PC-9 (cell line): ENCODE measurements at regions of chr3 and their contacts with region 1.

Region 1: GRCh38 chr3:151864423-151865101 is 8.9 kb upstream of the SUCNR1 start:
- DNase-seq: peak in 1 of 2 experiments; percentile 82
- H3K4me3 ChIP-seq: no peak overlapping the region
- H3K27ac ChIP-seq: peak overlapping the region; percentile 38
- H3K4me1 ChIP-seq: peaks cover 20% of the 10 kb centered on the region
- H3K27me3 ChIP-seq: no peaks in the 10 kb centered on the region
- CTCF ChIP-seq: no peak

Region 2: GRCh38 chr3:151327571-151328198 is 536.9 kb before region 1 on chr3:
- CTCF ChIA-PET with region 1: interaction called, 12 read pairs
- POLR2A ChIA-PET with region 1: no interaction called
- intact Hi-C with region 1: no loop called
- DNase-seq: no peak
- H3K4me3 ChIP-seq: no peak overlapping the region
- H3K27ac ChIP-seq: 0 out of 2 replicates have a peak overlapping the region, but pooled peaks have one; percentile 14
- H3K4me1 ChIP-seq: peaks cover 14% of the 10 kb centered on the region
- H3K27me3 ChIP-seq: no peaks in the 10 kb centered on the region
- CTCF ChIP-seq: peak; percentile 81

Region 3: DNA sequence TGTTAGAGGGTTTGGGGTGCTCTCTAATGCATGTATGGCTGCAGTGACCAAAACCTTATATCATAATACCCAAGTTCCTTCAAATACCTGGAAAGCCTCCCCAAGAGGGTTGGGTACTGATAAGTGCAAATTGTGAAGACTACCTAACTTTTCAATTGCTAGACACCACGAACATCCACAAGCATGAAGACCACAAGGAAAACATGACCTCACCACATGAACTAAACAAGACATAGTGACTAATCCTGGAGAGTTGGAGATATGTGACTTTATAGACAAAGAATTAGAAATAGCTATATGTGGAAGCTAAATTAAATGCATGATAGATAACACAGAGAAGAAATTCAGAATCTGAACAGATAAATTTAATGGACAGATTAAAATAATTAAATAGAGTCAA is 154.7 kb before region 1 on chr3:
- CTCF ChIA-PET with region 1: no interaction called
- POLR2A ChIA-PET with region 1: interaction called, 27 read pairs
- intact Hi-C with region 1: no loop called
- DNase-seq: no peak
- H3K4me3 ChIP-seq: no peak overlapping the region
- H3K27ac ChIP-seq: no peak overlapping the region
- H3K4me1 ChIP-seq: no peaks in the 10 kb centered on the region
- H3K27me3 ChIP-seq: no peaks in the 10 kb centered on the region
- CTCF ChIP-seq: no peak

Region 4: GRCh38 chr3:151770956-151771355 is 93.6 kb before region 1 on chr3:
- CTCF ChIA-PET with region 1: no interaction called
- POLR2A ChIA-PET with region 1: no interaction called
- intact Hi-C with region 1: no loop called
- DNase-seq: peak in 1 of 2 experiments; percentile 45
- H3K4me3 ChIP-seq: no peak overlapping the region
- H3K27ac ChIP-seq: no peak overlapping the region
- H3K4me1 ChIP-seq: peaks cover 13% of the 10 kb centered on the region
- H3K27me3 ChIP-seq: no peaks in the 10 kb centered on the region
- CTCF ChIP-seq: no peak